ENCODE measurements at regions of chr5 and their contacts with region 1.

Region 1: GRCh38 chr5:171600741-171601265 is 181.4 kb downstream of the FGF18 start:
- DNase-seq: peak; percentile 31
- H3K4me3 Mint-ChIP-seq: peak overlapping the region; percentile 1
- H3K27ac Mint-ChIP-seq: peak overlapping the region; percentile 14
- H3K4me1 Mint-ChIP-seq: peaks cover 18% of the 10 kb centered on the region
- H3K27me3 Mint-ChIP-seq: peaks cover 32% of the 10 kb centered on the region

Region 2: DNA sequence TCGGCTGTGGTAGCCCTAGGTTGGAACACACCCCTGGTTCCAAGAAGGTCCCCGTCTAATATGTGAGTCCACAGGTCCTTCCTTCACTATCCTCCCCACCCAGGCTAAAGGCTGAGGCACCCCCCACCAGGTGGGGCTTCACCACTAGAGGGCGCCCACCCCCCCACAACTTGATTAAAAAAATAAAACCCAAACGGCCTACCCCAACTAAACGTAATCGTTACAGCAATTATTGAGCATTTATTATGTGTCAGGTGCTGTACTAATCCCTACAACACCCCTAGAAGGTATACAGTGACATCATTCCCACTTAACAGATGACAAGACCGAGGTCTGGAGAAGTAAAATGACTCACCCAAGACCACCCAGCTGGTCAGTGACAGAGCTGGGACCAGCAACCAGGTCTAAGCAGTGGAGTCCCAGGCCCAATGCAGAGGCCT is 116.3 kb before region 1 on chr5:
- CTCF ChIA-PET with region 1: interaction called, 6 read pairs
- intact Hi-C with region 1: loop called (anchors 2 kb)
- DNase-seq: peak; percentile 59
- H3K4me3 Mint-ChIP-seq: no peak overlapping the region
- H3K27ac Mint-ChIP-seq: no peak overlapping the region
- H3K4me1 Mint-ChIP-seq: peaks cover 5% of the 10 kb centered on the region
- H3K27me3 Mint-ChIP-seq: peaks cover 11% of the 10 kb centered on the region

Region 3: GRCh38 chr5:171562822-171563221 is 38.0 kb before region 1 on chr5:
- CTCF ChIA-PET with region 1: no interaction called
- intact Hi-C with region 1: loop called (anchors 1 kb)
- DNase-seq: peak; percentile 45
- H3K4me3 Mint-ChIP-seq: no peak overlapping the region
- H3K27ac Mint-ChIP-seq: no peak overlapping the region
- H3K4me1 Mint-ChIP-seq: peaks cover 4% of the 10 kb centered on the region
- H3K27me3 Mint-ChIP-seq: peaks cover 10% of the 10 kb centered on the region

Region 4: DNA sequence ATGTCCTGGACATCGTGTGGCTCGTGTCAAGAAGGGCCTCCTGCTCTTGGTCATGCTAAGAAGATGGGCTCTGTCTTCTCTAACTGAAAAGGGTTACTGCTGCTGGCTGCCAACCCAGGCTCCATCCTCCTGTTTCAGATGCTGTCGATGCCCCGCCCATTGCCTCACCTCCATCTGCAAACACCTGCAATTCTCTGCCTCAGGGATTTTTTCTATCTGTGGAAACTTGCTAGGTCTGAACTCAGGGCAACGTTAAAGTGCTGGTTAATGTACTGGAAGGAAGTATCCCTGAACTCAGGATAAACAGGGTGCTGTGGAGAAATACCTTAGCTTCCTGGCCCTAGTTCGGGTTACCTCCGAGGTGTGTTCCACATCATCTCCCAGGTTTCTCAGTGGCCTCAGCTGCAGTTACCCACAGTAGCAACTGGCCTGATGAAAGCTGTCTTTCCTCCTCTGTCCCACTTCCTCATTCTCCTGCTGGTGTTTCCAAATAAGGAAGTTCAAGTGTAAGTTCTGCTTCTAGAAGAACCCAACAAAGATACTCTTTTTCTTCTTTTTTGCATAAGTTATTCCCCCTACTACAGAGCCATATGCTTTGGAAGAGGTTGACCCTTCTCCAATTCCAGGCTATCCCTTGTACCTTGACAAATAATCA is 33.1 kb after region 1 on chr5:
- CTCF ChIA-PET with region 1: no interaction called
- intact Hi-C with region 1: no loop called
- DNase-seq: no peak
- H3K4me3 Mint-ChIP-seq: no peak overlapping the region
- H3K27ac Mint-ChIP-seq: no peak overlapping the region
- H3K4me1 Mint-ChIP-seq: no peaks in the 10 kb centered on the region
- H3K27me3 Mint-ChIP-seq: peaks cover 19% of the 10 kb centered on the region

Region 5: DNA sequence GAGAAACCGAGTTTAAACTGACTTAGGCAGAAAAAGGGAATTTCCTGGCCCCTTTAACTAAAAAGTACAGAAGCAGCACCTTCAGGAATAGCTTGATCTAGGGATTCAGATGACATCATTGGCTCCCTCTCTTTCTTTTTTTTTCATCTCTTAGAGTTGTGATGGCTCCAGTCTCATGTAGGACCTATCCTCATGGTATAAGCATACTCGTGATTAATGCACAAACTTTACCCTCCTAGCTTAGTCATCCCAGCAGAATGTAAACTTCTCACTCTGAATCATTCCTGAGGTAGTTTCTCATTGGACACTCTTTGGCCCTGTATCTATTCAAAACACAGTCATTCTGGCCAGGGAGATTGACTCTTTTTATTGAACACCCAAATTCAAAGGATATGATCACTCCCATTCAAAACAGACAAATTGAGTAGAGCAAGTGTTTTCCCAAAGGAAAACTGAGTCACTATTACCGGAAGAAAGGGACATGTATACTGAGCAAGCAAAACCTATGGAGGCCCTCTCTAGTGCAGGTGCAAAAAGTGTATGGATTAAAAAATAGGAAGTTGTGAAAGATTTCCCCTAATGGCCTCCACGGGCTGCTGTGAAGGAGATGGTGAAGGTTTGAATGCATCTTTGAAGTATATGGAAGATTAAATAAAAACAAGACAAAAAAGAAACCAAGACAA is 157.2 kb after region 1 on chr5:
- CTCF ChIA-PET with region 1: no interaction called
- intact Hi-C with region 1: loop called (anchors 1 kb)
- DNase-seq: no peak
- H3K4me3 Mint-ChIP-seq: no peak overlapping the region
- H3K27ac Mint-ChIP-seq: no peak overlapping the region
- H3K4me1 Mint-ChIP-seq: peaks cover 9% of the 10 kb centered on the region
- H3K27me3 Mint-ChIP-seq: peaks cover 6% of the 10 kb centered on the region

Region 6: GRCh38 chr5:171776770-171777759 is 176.3 kb after region 1 on chr5:
- CTCF ChIA-PET with region 1: no interaction called
- intact Hi-C with region 1: no loop called
- DNase-seq: no peak
- H3K4me3 Mint-ChIP-seq: no peak overlapping the region
- H3K27ac Mint-ChIP-seq: no peak overlapping the region
- H3K4me1 Mint-ChIP-seq: no peaks in the 10 kb centered on the region
- H3K27me3 Mint-ChIP-seq: peaks cover 2% of the 10 kb centered on the region

Region 7: DNA sequence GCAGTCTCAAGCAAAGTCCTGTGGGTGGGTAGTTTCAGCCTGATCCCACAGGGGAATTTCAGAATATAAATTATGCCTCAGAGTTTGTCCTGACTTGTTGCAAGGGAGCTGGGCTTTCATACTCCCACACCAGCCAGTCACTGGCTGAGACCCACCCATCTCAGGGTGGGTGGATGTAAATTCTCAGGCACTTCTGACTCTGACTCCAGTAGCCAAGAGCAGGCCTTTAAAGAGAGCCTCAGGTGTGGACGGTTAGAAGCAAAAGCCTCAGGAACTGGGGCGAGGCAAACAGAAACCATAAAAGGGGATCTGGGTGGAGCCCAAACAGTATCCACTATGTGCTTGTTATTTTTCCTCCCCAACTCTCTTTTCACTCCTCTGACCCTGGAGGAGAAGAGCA is 434.2 kb after region 1 on chr5:
- CTCF ChIA-PET with region 1: interaction called, 4 read pairs
- intact Hi-C with region 1: loop called (anchors 2 kb)
- DNase-seq: no peak
- H3K4me3 Mint-ChIP-seq: no peak overlapping the region
- H3K27ac Mint-ChIP-seq: no peak overlapping the region
- H3K4me1 Mint-ChIP-seq: peaks cover 13% of the 10 kb centered on the region
- H3K27me3 Mint-ChIP-seq: no peaks in the 10 kb centered on the region

Measured in activated naive CD4-positive, alpha-beta T cell treated with anti-CD3 and anti-CD28 coated beads for 36 hours (primary cell).